WTC11 (cell line): ENCODE measurements at regions of chr9 and their contacts with region 1.

Region 1: DNA sequence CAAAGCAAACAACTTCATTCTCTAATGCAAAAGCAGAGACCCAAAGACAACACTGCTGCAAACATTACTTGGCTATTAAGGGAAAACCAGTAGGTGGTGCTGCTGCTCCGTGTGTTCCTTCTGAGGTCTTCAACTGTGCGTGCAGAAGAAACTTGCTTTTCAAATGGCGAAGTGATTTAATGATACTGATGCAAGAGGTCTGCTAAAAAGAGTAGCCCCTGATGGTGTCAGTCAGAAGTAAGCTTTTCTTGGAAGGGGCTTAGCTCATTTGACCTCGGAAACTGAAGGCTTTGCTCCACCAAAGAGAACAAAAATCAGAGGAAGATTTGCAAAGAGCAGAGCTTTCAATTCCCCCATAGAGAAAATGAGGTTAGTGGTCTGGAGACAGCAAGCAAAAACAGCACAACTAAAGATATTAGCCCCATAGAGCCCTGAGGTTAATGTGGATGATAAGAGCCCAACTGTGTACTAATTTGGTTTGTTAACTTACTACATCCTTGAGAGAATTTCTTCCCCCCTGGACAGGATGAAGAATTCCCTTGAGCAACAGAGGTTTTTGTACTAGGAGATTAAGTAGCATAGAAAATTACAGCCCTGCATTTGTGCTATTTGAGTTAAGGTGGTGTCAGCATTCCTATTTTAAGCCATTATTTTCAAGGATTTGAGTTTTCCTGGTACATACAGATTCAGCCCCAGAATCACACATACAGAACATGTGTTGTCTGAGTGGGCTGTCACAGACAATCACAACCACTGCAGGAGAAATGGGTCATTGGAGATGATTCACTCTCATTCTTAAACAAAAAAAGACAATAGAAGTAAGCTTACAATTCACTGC is 153.2 kb upstream of the C9orf72 start:
- DNase-seq: peak; percentile 82
- ATAC-seq: peak; percentile 86
- H3K4me3 Mint-ChIP-seq: no peak overlapping the region
- H3K27ac Mint-ChIP-seq: no peak overlapping the region
- H3K4me1 Mint-ChIP-seq: peaks cover 38% of the 10 kb centered on the region
- H3K27me3 Mint-ChIP-seq: no peaks in the 10 kb centered on the region
- CTCF ChIP-seq: peak; percentile 84

Region 2: DNA sequence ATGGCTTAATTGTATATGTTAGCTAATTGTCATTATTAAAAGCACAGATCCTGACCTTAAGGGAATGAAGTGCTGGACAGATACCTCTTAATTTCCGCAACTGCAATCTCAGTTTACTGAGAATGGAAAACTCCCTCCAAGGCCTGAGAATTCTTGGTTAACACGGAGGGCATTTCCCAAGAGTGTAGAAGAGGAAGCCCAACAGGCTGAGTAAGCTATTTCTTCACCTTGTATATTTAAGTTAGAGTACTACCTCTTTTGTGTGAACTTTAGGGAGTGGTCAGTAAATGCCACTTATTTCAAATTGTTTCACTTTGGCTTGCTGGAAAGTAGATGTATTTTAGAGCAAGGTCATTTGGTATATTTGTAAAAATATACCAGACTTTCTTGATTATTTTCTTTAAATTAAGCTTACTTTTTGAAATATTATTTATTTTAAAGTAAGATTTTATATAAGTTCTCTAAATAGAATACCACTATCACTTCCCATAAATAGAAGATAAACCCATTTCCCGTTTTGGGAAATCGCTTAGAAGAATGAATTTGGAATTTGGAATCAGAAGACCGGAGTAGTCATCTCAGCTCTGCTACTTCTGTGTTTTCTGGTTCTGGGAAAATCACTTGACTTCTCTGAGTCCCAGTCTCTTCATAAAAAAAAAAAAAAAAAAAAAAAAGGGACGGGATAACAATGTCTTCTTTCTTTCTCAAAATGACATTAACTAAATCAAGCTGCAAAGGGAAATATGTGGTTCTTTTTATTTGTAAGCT is 127.2 kb before region 1 on chr9:
- CTCF ChIA-PET with region 1: no interaction called
- POLR2A ChIA-PET with region 1: no interaction called
- DNase-seq: no peak
- ATAC-seq: no peak
- H3K4me3 Mint-ChIP-seq: no peak overlapping the region
- H3K27ac Mint-ChIP-seq: no peak overlapping the region
- H3K4me1 Mint-ChIP-seq: peaks cover 15% of the 10 kb centered on the region
- H3K27me3 Mint-ChIP-seq: no peaks in the 10 kb centered on the region; the same call in 1 of the 2 replicates
- CTCF ChIP-seq: no peak

Region 3: DNA sequence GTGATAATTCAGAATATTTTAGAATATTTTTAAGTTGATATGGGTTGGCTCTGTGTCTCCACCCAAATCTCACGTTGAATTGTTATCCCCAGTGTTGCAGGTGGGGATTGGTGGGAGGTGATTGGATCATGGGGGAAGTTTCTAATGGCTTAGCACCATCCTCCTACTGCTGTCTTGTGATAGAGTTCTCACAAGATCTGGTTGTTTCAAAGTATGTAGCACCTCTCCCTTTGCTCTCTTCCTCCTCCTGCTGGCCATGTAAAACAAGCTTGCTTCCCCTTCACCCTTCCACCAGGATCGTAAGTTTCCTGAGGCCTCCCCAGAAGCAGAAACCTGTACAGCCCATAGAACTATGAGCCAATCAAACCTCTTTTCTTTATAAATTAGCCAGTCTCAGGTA is 61.4 kb after region 1 on chr9:
- CTCF ChIA-PET with region 1: interaction called, 12 read pairs
- POLR2A ChIA-PET with region 1: no interaction called
- DNase-seq: peak; percentile 26
- ATAC-seq: peak; percentile 92
- H3K4me3 Mint-ChIP-seq: no peak overlapping the region
- H3K27ac Mint-ChIP-seq: no peak overlapping the region
- H3K4me1 Mint-ChIP-seq: no peaks in the 10 kb centered on the region
- H3K27me3 Mint-ChIP-seq: no peaks in the 10 kb centered on the region
- CTCF ChIP-seq: peak; percentile 34; the same call in 1 of the 2 replicates

Region 4: GRCh38 chr9:28073270-28073669 is 346.8 kb after region 1 on chr9:
- CTCF ChIA-PET with region 1: interaction called, 17 read pairs
- POLR2A ChIA-PET with region 1: no interaction called
- DNase-seq: peak; percentile 36
- ATAC-seq: no peak; the same call in 1 of the 2 replicates
- H3K4me3 Mint-ChIP-seq: no peak overlapping the region
- H3K27ac Mint-ChIP-seq: no peak overlapping the region
- H3K4me1 Mint-ChIP-seq: no peaks in the 10 kb centered on the region
- H3K27me3 Mint-ChIP-seq: no peaks in the 10 kb centered on the region
- CTCF ChIP-seq: no peak; the same call in 1 of the 2 replicates